MCF 10A (cell line): ENCODE measurements at regions of chr12 and their contacts with region 1.

Region 1: GRCh38 chr12:53344824-53345485 is 8.8 kb upstream of the SP7 start:
- DNase-seq: peak; percentile 72
- H3K4me3 Mint-ChIP-seq: peak overlapping the region; percentile 75
- H3K27ac Mint-ChIP-seq: no peak overlapping the region
- H3K4me1 Mint-ChIP-seq: peaks cover 7% of the 10 kb centered on the region
- H3K27me3 Mint-ChIP-seq: peaks cover 13% of the 10 kb centered on the region
- CTCF ChIP-seq: peak; percentile 62

Region 2: GRCh38 chr12:52691076-52691840 is 653.7 kb before region 1 on chr12:
- CTCF ChIA-PET with region 1: no interaction called
- POLR2A ChIA-PET with region 1: no interaction called
- intact Hi-C with region 1: no loop called
- DNase-seq: no peak
- H3K4me3 Mint-ChIP-seq: no peak overlapping the region
- H3K27ac Mint-ChIP-seq: no peak overlapping the region
- H3K4me1 Mint-ChIP-seq: peaks cover 8% of the 10 kb centered on the region
- H3K27me3 Mint-ChIP-seq: peaks cover 41% of the 10 kb centered on the region
- CTCF ChIP-seq: no peak

Region 3: GRCh38 chr12:53358844-53359431 is 14.0 kb after region 1 on chr12:
- CTCF ChIA-PET with region 1: interaction called, 12 read pairs
- POLR2A ChIA-PET with region 1: no interaction called
- intact Hi-C with region 1: no loop called
- DNase-seq: no peak
- H3K4me3 Mint-ChIP-seq: no peak overlapping the region
- H3K27ac Mint-ChIP-seq: no peak overlapping the region
- H3K4me1 Mint-ChIP-seq: no peaks in the 10 kb centered on the region
- H3K27me3 Mint-ChIP-seq: no peaks in the 10 kb centered on the region
- CTCF ChIP-seq: no peak

Region 4: GRCh38 chr12:53543539-53543938 is 198.6 kb after region 1 on chr12:
- CTCF ChIA-PET with region 1: no interaction called
- POLR2A ChIA-PET with region 1: no interaction called
- intact Hi-C with region 1: no loop called
- DNase-seq: peak; percentile 73
- H3K4me3 Mint-ChIP-seq: no peak overlapping the region
- H3K27ac Mint-ChIP-seq: peak overlapping the region; percentile 57
- H3K4me1 Mint-ChIP-seq: peaks cover 19% of the 10 kb centered on the region
- H3K27me3 Mint-ChIP-seq: no peaks in the 10 kb centered on the region
- CTCF ChIP-seq: peak; percentile 76

Region 5: GRCh38 chr12:53596920-53597363 is 252.0 kb after region 1 on chr12:
- CTCF ChIA-PET with region 1: no interaction called
- POLR2A ChIA-PET with region 1: no interaction called
- intact Hi-C with region 1: no loop called
- DNase-seq: no peak
- H3K4me3 Mint-ChIP-seq: no peak overlapping the region
- H3K27ac Mint-ChIP-seq: no peak overlapping the region
- H3K4me1 Mint-ChIP-seq: peaks cover 5% of the 10 kb centered on the region
- H3K27me3 Mint-ChIP-seq: no peaks in the 10 kb centered on the region
- CTCF ChIP-seq: no peak